Heart right ventricle (tissue), 16 donors: ENCODE measurements at regions of chr14 and their contacts with region 1.

Region 1: DNA sequence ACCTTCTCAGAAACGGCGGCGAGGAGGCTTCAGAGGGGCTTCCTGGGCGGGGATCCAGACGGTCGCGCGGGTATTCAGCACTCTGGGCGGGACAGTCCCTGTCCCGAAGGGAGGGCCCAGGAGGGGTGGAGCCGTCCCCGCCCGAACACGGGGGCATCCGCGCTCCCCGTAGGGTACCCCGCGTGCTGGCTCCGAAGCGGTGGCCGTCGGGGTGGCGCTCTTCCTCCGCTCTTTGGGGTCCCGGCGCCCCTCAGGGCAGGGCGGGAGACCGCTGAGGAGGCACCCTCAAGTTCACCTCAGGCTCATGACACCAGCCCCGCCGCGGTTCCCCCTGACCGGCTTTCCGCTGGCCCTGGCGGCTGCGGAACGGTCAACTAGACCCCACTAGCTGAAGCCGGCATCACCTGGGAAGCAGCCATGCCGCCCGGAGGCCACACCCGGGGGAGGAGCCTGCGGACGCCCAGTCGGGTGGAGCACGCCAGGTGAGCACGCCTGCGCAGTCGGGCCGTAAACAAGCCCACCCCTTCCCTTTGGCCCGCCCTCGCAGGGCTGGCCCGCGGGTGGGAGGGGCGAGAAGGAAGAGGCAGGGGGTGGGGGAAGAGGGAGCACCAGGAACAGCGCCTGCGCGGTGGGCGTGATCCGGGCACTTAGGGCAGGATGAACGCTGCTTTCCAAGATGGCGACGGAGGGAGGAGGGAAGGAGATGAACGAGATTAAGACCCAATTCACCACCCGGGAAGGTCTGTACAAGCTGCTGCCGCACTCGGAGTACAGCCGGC is at the start of gene WDR20:
- DNase-seq: peak; percentile 98 to 99
- ATAC-seq: peak; percentile 99 to 100 (median 99)
- H3K4me3 ChIP-seq: peak within 1 kb of the TSS; percentile 71 to 100 (median 94)
- H3K27ac ChIP-seq: peak within 1 kb of the TSS; percentile 42 to 94 (median 84)
- H3K4me1 ChIP-seq: peaks cover 6 to 37% (median 30%) of the 10 kb centered on the region in 9 donors
- H3K27me3 ChIP-seq: no peaks in the 10 kb centered on the region
- CTCF ChIP-seq: no peak
- total RNA-seq, gene WDR20: 19.0 to 28.0 (median 20.6) TPM

Region 2: DNA sequence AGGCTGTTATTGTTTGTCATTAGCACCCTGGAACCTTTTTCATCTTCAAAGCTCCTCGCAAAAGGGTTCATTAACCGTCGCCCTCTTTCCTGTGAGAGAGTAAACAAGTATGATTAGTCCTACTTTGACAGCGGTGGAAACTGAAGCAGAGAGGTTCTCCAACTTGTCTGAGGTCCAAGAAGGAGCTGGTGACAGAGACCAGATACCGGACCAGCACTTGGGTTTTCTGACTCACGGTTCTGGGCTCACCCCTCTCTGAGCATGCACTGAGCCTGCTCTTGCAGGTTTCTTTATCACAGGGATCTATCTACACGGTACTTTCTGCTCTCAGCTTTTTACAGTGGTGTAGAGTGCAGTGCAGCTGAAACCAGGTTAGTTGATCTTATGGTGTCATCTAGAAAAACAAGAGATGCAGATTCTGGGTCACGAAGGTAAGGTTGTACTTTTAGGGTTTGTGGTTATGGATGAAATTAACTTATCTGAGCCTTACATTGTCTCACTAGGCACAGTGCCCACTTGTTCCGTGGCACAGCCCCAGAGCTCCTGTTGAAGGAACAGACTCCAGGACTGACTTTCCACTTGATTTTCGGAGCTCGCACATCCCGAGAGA is 315.8 kb before region 1 on chr14:
- intact Hi-C with region 1: no loop called
- DNase-seq: no peak
- ATAC-seq: peak in 7 of 8 donors; percentile 28 to 88 (median 50)
- H3K4me3 ChIP-seq: peak overlapping the region in 6 of 10 donors; percentile 8 to 39 (median 22)
- H3K27ac ChIP-seq: peak overlapping the region in 9 of 10 donors; percentile 48 to 93 (median 80)
- H3K4me1 ChIP-seq: peaks cover 5 to 73% (median 57%) of the 10 kb centered on the region in 9 donors
- H3K27me3 ChIP-seq: no peaks in the 10 kb centered on the region
- CTCF ChIP-seq: no peak

Region 3: DNA sequence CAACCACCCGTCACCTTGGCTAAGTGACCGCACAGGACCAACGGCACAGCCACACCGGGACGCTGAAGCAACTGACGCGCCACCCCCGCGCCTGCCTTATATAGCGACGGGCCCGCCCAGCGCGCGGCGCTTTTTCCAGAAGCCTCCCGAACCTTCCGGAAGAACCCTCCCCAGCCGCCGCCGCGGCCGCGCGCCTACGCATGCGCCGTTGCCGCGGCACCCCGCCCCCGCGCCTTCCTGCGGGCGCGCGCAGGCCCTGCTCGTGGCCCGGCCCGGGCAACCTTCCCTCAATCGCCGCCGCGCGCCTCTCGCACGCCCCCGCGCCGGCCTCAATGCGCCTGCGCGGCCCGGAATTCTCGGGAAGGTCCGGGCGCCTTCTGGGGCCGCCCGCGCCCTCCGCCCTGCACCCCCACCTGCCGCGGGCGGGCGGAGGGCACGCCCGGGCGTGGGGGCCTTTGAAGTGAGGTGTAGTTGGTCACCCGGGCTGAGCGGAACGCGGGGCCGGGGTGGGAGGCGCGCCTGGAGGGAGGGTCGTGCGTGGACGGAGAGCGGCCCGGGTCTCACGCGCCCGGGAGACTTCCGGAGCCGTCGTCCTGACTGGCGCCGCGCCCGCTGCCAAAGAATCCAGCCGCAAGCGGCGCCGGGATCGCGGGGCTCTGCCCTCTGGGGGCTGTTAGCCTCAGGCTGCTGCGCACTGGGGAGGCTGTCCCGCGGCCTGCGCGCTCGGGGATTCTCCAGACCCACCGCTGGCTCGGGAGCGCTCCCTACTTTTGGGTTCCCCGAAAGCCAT is 52.3 kb before region 1 on chr14 and contains the start of gene HSP90AA1:
- intact Hi-C with region 1: loop called in 1 of 10 experiments (anchors 5 kb)
- DNase-seq: peak; percentile 95
- ATAC-seq: peak; percentile 83 to 95 (median 91)
- H3K4me3 ChIP-seq: peak within 1 kb of the TSS; percentile 72 to 99 (median 86)
- H3K27ac ChIP-seq: peak within 1 kb of the TSS; percentile 99 to 100 (median 100)
- H3K4me1 ChIP-seq: peaks cover 5 to 55% (median 50%) of the 10 kb centered on the region in 9 donors
- H3K27me3 ChIP-seq: no peaks in the 10 kb centered on the region
- CTCF ChIP-seq: peak in 6 of 9 donors; percentile 12 to 49 (median 34)
- total RNA-seq, gene HSP90AA1: 315 to 501 (median 402) TPM

Region 4: GRCh38 chr14:102200690-102201352 is 61.4 kb after region 1 on chr14:
- intact Hi-C with region 1: loop called in 2 of 10 experiments (anchors 5 to 10 kb)
- DNase-seq: no peak
- ATAC-seq: peak in 3 of 8 donors; percentile 11 to 41 (median 31)
- H3K4me3 ChIP-seq: no peak overlapping the region
- H3K27ac ChIP-seq: no peak overlapping the region
- H3K4me1 ChIP-seq: peaks cover 0 to 21% (median 14%) of the 10 kb centered on the region in 9 donors
- H3K27me3 ChIP-seq: no peaks in the 10 kb centered on the region
- CTCF ChIP-seq: no peak

Region 5: GRCh38 chr14:102209217-102209966 is 70.0 kb after region 1 on chr14:
- intact Hi-C with region 1: loop called in 2 of 10 experiments (anchors 5 to 10 kb)
- DNase-seq: no peak
- ATAC-seq: peak; percentile 43 to 87 (median 71)
- H3K4me3 ChIP-seq: no peak overlapping the region
- H3K27ac ChIP-seq: peak overlapping the region in 4 of 10 donors; percentile 0 to 55 (median 38)
- H3K4me1 ChIP-seq: peaks cover 0 to 10% (median 0%) of the 10 kb centered on the region in 9 donors
- H3K27me3 ChIP-seq: no peaks in the 10 kb centered on the region
- CTCF ChIP-seq: peak in 5 of 9 donors; percentile 26 to 51 (median 44)

Region 6: DNA sequence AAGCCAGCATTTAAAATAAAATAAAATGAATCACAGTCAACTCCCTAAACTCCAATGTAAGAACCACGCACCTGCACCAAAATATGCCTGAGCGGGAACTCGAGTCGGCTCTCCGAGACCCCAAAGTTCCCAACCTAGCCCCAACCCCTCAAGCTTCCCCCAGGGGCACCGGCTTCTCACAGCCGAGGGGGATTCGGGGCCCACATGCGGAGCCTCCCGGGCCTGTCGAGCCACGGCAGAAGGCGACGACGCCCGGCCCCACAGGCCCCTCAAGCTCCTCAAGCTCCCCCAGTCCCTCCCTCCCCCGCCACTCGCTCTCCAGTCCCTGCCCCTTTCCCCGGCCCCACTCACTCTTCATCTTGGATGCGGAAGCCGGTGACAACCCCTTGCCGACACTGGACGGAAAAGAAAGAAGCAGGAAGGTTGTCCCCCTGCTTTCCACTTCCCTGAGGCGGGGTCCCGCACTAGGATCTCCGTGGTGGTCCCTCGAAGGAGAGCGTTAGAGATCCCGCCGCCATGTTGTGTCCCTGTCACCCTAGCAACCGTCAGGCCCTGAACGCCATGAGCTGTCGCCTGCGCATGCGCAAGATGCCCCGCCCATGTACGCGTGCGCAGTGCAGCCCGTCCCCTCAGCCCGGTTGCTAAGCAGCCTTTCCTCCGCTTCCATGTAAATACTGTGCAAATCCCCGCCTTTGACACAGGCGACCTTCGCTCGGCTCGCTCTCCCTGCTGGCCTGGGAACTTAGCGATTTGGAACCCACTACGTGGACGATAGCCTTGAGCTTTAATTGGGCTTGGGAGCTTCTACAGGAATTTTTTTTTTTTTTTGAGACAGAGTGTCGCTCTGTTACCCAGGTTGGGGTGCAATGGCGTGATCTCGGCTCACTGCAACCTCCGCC is 165.4 kb after region 1 on chr14 and contains the start of gene MOK:
- intact Hi-C with region 1: loop called in 3 of 10 experiments (anchors 5 kb)
- DNase-seq: peak; percentile 96 to 98
- ATAC-seq: peak; percentile 98 to 100 (median 100)
- H3K4me3 ChIP-seq: peak within 1 kb of the TSS; percentile 63 to 80 (median 74)
- H3K27ac ChIP-seq: peak within 1 kb of the TSS; percentile 49 to 91 (median 82)
- H3K4me1 ChIP-seq: peaks cover 0 to 21% (median 10%) of the 10 kb centered on the region in 9 donors
- H3K27me3 ChIP-seq: no peaks in the 10 kb centered on the region
- CTCF ChIP-seq: peak in 2 of 9 donors; percentile 16 to 18
- total RNA-seq, gene MOK: 6.6 to 15.5 (median 9.5) TPM